A549 (cell line): ENCODE measurements at regions of chr6 and their contacts with region 1.

Region 1: GRCh38 chr6:52598123-52598823 is 21.4 kb upstream of the TRAM2 start:
- DNase-seq: peak; percentile 61 to 76
- ATAC-seq: peak; percentile 77 to 90
- H3K4me3 ChIP-seq: no peak overlapping the region
- H3K27ac ChIP-seq: peak overlapping the region; percentile 18 to 36; a peak in 4 of 6 replicates
- H3K4me1 ChIP-seq: peaks cover 37% of the 10 kb centered on the region
- CTCF ChIP-seq: peak; percentile 45
- EP300 ChIP-seq: no peak
- POLR2A ChIP-seq: no peak
- RAD21 ChIP-seq: peak; percentile 47 to 51

Region 2: DNA sequence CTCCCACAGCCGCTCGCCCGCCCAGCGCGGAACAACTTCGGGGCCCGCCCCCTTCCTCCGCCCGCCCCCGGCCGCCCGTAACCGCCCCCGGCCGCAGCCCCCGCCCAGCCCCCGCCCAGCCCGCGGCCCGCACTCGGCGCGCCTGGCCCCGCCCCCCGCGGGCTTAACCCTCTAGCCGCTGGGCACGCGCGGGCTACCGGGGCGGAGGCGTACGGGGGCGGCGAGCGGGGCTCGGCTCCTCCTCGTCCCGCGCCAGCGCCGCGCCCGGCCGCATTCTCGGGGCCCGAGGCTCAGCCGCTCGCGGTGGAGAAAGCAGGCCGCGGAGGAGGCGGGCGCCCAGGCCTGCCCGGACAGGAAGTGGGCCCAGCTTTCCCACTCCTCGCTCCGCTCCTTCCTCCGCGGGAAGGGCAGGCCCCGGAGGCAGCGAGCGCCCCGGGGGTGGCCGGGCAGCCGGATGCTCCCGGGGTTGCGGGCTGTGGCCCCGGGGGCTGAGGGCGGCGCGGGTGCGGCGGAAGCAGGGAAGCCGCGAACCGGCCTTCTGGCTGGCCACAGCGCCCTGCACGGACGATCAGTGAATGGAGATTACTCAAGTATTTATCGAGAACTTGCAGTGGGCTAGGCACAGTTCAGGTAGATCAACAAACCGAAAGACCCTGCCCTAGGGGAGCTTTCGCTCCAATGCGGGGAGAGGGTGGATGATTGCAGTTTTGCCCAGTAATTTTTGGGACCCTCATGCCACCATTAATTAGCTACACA is 21.1 kb before region 1 on chr6 and contains the start of gene TRAM2:
- CTCF ChIA-PET with region 1: interaction called, 22 read pairs
- POLR2A ChIA-PET with region 1: interaction called, 14 read pairs
- DNase-seq: peak; percentile 40 to 72
- ATAC-seq: peak; percentile 84 to 86
- H3K4me3 ChIP-seq: peak within 1 kb of the TSS; percentile 69
- H3K27ac ChIP-seq: peak within 1 kb of the TSS; percentile 95 to 100
- H3K4me1 ChIP-seq: peaks cover 39% of the 10 kb centered on the region
- CTCF ChIP-seq: no peak
- EP300 ChIP-seq: no peak
- POLR2A ChIP-seq: peak; percentile 59
- RAD21 ChIP-seq: no peak; a peak in 1 of 5 replicates
- polyA plus RNA-seq, gene TRAM2: 25.4 and 25.6 TPM in 2 replicates

Region 3: DNA sequence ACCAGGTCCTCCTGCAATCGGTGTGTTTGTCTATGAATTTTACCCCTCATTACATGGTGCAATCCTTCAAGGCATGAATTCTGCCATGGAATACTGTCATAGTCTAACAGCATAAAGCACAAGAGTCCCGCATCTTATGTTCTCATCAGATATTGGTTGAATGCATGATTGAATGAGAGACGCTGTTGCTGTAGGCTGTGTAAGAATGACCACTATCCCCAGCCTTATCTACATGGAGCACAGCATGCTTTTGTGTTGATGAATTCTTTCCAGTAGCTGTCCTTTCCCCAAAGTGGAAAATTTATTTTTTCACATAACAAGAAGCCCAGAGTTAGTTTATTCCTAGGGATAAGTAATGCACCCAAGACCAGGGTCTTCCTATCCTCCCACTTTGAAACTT is 15.8 kb before region 1 on chr6:
- CTCF ChIA-PET with region 1: interaction called, 22 read pairs
- POLR2A ChIA-PET with region 1: interaction called, 14 read pairs
- DNase-seq: no peak
- ATAC-seq: no peak
- H3K4me3 ChIP-seq: no peak overlapping the region
- H3K27ac ChIP-seq: no peak overlapping the region
- H3K4me1 ChIP-seq: peaks cover 5% of the 10 kb centered on the region; the same call in 2 of the 3 replicates
- CTCF ChIP-seq: no peak
- EP300 ChIP-seq: no peak
- POLR2A ChIP-seq: no peak
- RAD21 ChIP-seq: no peak

Region 4: DNA sequence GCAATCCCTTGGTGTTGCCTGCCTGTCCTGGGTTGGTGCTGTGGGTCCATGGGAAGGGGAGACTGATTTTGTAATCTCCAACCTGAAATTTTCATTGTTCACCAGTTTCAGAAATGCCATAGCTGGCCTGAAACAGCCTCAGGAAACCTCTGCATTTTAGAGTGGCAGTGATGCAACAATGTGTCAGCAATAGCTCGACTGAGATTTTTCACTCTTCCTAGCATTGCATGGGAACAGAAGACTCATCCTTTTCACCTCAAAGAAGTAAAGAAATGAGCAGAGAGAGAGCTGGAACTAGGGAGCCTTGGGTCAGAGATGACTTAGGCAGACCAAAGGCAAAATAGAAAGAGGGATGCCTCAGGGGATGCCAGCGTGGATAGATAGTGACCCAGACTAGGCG is 48.9 kb after region 1 on chr6:
- CTCF ChIA-PET with region 1: interaction called, 17 read pairs
- POLR2A ChIA-PET with region 1: no interaction called
- DNase-seq: no peak
- ATAC-seq: no peak
- H3K4me3 ChIP-seq: no peak overlapping the region
- H3K27ac ChIP-seq: no peak overlapping the region
- H3K4me1 ChIP-seq: no peaks in the 10 kb centered on the region
- CTCF ChIP-seq: no peak
- EP300 ChIP-seq: no peak
- POLR2A ChIP-seq: no peak
- RAD21 ChIP-seq: no peak